ENCODE measurements at regions of chr6 and their contacts with region 1.

Region 1: GRCh38 chr6:88982720-88983119 is 19.3 kb upstream of the RNGTT start:
- DNase-seq: peak; percentile 71
- H3K4me3 Mint-ChIP-seq: no peak overlapping the region
- H3K27ac Mint-ChIP-seq: no peak overlapping the region
- H3K4me1 Mint-ChIP-seq: no peaks in the 10 kb centered on the region
- H3K27me3 Mint-ChIP-seq: peaks cover 12% of the 10 kb centered on the region

Region 2: DNA sequence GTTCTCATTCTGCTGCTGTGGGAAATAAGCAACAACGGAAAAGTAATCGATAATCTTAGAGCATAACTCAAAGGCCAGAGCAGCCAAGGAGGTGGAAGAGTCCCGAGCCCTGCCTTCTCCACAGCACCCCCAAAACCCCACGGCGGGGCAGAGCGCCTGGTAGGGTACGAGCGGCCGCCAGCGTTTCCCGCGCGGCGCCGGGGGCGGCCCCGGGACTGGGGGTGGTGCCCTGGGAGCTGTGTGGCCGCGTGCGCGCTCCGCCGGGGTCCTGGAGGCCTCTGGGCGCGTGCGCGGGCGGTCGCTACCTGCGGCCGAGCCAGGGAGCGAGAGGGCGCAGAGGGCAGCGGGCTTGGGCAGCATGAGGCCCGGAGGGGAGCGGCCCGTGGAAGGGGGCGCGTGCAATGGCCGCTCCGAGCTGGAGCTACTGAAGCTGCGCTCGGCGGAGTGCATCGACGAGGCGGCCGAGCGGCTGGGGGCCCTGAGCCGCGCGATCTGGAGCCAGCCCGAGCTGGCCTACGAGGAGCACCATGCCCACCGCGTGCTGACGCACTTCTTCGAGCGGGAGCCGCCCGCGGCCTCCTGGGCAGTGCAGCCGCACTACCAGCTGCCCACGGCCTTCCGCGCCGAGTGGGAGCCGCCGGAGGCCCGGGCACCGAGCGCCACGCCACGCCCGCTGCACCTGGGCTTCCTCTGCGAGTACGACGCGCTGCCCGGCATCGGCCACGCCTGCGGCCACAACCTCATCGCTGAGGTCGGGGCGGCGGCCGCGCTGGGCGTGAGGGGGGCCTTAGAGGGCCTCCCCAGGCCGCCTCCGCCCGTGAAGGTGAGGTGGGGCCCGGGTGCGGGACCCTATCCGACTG is 163.3 kb after region 1 on chr6 and contains the start of gene PM20D2:
- intact Hi-C with region 1: loop called (anchors 1 kb)
- DNase-seq: peak; percentile 90
- H3K4me3 Mint-ChIP-seq: peak within 1 kb of the TSS; percentile 91
- H3K27ac Mint-ChIP-seq: peak within 1 kb of the TSS; percentile 98
- H3K4me1 Mint-ChIP-seq: peaks cover 26% of the 10 kb centered on the region
- H3K27me3 Mint-ChIP-seq: peaks cover 12% of the 10 kb centered on the region
- total RNA-seq, gene PM20D2: 18.3 and 18.9 TPM in 2 replicates

Region 3: DNA sequence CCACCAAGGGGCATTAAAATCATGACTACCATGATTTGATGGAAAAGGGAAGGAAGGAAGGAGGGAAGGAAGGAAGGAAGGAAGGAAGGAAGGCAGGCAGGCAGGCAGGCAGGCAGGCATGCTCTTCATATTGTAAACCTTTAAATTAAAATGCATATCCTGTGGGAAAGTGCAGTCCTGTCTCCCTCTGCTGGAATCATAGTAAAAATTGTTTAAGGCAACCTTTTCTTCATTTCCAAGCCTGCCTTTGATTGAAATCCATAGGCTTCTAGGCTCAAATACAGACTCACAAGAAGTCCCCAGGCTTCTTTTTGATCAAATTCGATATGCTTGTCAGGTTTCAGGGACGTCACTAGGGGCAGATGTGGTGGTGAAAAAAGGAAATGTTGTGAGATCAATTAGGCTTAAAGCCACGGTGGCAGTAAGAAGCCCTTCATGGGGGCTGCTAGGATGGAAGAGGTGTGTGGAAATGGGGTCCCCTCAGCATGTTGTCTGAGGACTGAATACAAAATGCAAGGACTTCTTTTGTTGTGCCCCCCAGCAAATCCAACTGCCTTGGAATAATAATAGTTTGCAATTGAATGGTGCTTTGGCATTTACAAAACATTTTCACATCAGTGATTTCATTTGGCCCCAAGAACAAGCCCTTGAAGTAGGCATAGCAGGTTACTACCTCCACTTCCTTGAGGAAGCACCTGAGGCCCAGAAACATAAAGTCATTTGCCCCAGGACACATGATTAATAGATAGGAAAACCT is 260.0 kb after region 1 on chr6:
- intact Hi-C with region 1: loop called (anchors 2 kb)
- DNase-seq: no peak
- H3K4me3 Mint-ChIP-seq: no peak overlapping the region
- H3K27ac Mint-ChIP-seq: no peak overlapping the region
- H3K4me1 Mint-ChIP-seq: peaks cover 9% of the 10 kb centered on the region
- H3K27me3 Mint-ChIP-seq: peaks cover 18% of the 10 kb centered on the region

Region 4: DNA sequence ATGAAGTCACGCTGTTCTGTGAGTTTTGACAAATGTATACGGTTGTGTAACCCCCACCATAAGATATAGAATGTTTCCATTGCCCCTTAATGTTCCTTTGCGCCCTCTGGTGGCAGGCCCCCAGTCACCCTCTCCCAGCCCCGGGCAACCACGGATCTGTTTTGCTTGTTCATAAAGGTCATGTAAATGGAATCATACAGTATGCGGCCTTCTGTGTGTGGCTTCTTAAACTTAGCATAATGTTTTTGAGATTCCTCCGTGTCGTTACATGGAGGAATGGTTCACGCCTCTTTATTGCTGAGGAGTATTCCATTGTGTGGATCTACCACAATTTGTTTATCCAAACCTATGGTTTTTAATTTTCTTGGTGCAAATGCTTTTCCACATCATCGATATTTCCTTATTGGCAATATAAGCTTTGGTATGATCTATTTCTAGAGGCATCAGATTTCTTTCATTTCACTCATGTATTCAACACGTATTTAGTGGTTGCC is 627.5 kb after region 1 on chr6:
- intact Hi-C with region 1: loop called (anchors 5 kb)
- DNase-seq: peak; percentile 93
- H3K4me3 Mint-ChIP-seq: no peak overlapping the region
- H3K27ac Mint-ChIP-seq: no peak overlapping the region
- H3K4me1 Mint-ChIP-seq: peaks cover 12% of the 10 kb centered on the region
- H3K27me3 Mint-ChIP-seq: no peaks in the 10 kb centered on the region